CD8-positive, alpha-beta T cell (primary cell): ENCODE measurements at regions of chr17 and their contacts with region 1.

Region 1: DNA sequence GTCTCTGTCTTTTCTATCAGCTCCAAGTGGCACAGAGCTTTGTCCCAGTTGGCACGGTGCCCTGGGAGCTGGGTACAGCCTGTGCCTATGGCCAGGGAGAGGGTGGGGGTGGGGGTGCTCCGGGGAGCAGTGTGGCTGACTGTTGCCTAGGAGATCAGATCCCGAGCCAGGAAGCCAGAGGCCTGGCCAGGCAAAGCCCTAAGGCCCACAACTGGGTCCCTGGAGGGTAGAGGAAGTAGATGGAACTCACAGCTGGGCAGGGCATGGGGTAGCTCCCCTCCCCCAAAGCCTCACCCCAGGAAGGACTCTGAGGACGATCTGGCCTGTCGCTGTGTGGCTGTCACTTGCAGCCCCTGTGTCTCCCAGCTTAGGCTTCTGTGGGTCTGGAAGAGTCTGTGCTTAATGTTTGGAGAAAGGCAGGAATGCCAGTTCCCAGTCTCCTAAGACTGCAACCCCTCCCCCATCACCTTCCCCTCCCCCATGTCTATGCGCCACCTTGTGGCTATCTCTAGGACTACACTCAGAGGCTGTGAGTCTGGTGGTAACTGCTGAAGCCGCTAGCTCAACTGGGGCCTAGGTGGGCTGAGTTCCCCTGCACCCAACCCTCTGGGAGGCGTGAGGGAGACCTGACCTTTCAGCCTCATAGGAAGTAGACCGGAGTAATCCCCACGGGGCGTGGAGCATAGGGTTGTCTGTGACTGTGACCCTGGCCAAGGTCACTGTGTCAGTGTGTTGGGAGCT is 12.6 kb downstream of the THRA start:
- DNase-seq: peak; percentile 48 to 81 (median 70)
- ATAC-seq: peak; percentile 96
- H3K4me3 ChIP-seq: no peak overlapping the region
- H3K4me3 Mint-ChIP-seq: peak overlapping the region; percentile 45
- H3K27ac ChIP-seq: no peak overlapping the region
- H3K27ac Mint-ChIP-seq: peak overlapping the region; percentile 62
- H3K4me1 ChIP-seq: peaks cover 49% of the 10 kb centered on the region
- H3K4me1 Mint-ChIP-seq: peaks cover 53% of the 10 kb centered on the region
- H3K27me3 ChIP-seq: no peaks in the 10 kb centered on the region
- H3K27me3 Mint-ChIP-seq: no peaks in the 10 kb centered on the region
- CTCF ChIP-seq: peak; percentile 90

Region 2: DNA sequence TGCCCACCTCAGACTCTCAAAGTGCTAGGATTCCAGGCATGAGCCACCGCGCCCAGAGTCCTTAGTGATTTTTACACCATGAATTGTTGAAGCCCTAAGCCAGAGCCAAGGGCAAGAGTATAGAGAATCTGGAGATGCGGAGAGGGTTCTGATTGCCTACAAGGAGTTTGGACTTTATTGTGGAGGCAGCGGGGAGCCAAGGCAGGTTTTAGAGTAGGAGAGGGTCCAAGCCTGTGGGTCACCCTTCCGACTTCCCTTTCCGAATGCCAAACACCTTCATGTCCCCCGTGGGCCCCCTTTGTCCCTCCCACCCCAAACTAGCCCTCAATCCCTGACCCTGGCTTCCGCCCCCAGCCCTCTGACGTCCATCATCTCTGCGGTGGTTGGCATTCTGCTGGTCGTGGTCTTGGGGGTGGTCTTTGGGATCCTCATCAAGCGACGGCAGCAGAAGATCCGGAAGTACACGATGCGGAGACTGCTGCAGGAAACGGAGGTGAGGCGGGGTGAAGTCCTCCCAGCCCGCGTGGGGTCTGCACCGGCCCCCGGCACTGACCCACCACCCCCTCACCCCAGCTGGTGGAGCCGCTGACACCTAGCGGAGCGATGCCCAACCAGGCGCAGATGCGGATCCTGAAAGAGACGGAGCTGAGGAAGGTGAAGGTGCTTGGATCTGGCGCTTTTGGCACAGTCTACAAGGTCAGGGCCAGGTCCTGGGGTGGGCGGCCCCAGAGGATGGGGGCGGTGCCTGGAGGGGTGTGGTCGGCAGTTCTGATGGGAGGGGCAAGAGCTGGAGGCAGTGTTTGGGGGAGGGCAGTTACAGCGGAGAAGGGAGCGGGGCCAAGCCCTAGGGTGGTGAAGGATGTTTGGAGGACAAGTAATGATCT is 352.2 kb before region 1 on chr17:
- CTCF ChIA-PET with region 1: no interaction called
- POLR2A ChIA-PET with region 1: no interaction called
- intact Hi-C with region 1: no loop called
- DNase-seq: no peak
- ATAC-seq: no peak
- H3K4me3 ChIP-seq: no peak overlapping the region
- H3K4me3 Mint-ChIP-seq: no peak overlapping the region
- H3K27ac ChIP-seq: no peak overlapping the region
- H3K27ac Mint-ChIP-seq: no peak overlapping the region
- H3K4me1 ChIP-seq: no peaks in the 10 kb centered on the region
- H3K4me1 Mint-ChIP-seq: no peaks in the 10 kb centered on the region
- H3K27me3 ChIP-seq: no peaks in the 10 kb centered on the region
- H3K27me3 Mint-ChIP-seq: no peaks in the 10 kb centered on the region
- CTCF ChIP-seq: no peak

Region 3: GRCh38 chr17:40026816-40027613 is 48.4 kb before region 1 on chr17:
- CTCF ChIA-PET with region 1: interaction called, 36 read pairs
- POLR2A ChIA-PET with region 1: no interaction called
- intact Hi-C with region 1: no loop called
- DNase-seq: peak; percentile 45 to 87 (median 78)
- ATAC-seq: peak; percentile 88
- H3K4me3 ChIP-seq: no peak overlapping the region
- H3K4me3 Mint-ChIP-seq: no peak overlapping the region
- H3K27ac ChIP-seq: no peak overlapping the region
- H3K27ac Mint-ChIP-seq: no peak overlapping the region
- H3K4me1 ChIP-seq: peaks cover 21% of the 10 kb centered on the region
- H3K4me1 Mint-ChIP-seq: peaks cover 22% of the 10 kb centered on the region
- H3K27me3 ChIP-seq: no peaks in the 10 kb centered on the region
- H3K27me3 Mint-ChIP-seq: no peaks in the 10 kb centered on the region
- CTCF ChIP-seq: peak; percentile 79

Region 4: GRCh38 chr17:40062329-40063186 is 12.8 kb before region 1 on chr17 and contains the start of gene THRA:
- CTCF ChIA-PET with region 1: interaction called, 402 read pairs
- POLR2A ChIA-PET with region 1: interaction called, 22 read pairs
- intact Hi-C with region 1: loop called (anchors 1 kb)
- DNase-seq: peak; percentile 47 to 88 (median 71)
- ATAC-seq: peak; percentile 90
- H3K4me3 ChIP-seq: peak within 1 kb of the TSS; percentile 84 to 97
- H3K4me3 Mint-ChIP-seq: peak within 1 kb of the TSS; percentile 91
- H3K27ac ChIP-seq: peak within 1 kb of the TSS; percentile 49 to 64
- H3K27ac Mint-ChIP-seq: peak within 1 kb of the TSS; percentile 85
- H3K4me1 ChIP-seq: peaks cover 48% of the 10 kb centered on the region
- H3K4me1 Mint-ChIP-seq: peaks cover 45% of the 10 kb centered on the region
- H3K27me3 ChIP-seq: no peaks in the 10 kb centered on the region
- H3K27me3 Mint-ChIP-seq: no peaks in the 10 kb centered on the region
- CTCF ChIP-seq: no peak
- total RNA-seq, gene THRA: 34.6 to 35.7 TPM

Region 5: DNA sequence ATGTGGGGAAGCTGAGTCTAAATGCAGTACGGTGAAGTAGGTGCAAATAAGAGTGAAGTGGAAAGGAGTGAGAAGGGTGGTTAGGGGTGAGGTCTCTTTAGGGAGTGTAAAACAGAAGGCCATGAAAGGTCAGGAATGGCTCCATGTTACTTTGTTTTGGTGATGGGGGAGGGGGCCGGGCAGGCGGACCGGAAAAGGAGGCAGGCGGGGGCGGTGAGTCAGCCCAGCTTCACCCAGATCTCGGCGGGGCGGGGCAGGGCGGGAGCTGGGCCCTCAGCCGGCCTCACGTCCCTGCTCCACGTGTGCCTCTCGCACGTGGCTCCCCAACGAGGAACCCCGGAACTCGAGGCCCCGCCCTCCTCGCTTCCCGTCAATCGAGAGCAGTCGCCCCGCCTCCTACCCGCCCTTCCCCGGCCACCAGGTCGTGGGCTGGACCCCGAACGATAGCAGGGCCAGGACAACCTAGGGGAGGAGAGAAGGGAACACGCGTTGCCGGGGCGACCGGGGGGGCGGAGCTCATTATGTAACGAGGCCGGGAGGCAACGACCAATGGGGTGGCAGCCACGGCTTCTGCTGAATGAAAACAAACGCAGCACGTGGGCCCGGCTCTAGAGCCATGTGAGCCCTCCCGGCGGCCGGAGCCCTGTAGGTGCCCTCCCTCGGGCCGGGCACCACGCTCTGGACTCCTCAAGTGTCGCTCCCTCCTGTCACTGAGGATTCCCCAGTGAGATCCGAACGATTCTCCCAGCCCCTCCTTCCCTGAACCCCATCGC is 23.7 kb after region 1 on chr17:
- CTCF ChIA-PET with region 1: interaction called, 27 read pairs
- POLR2A ChIA-PET with region 1: interaction called, 20 read pairs
- intact Hi-C with region 1: loop called in 1 of 2 experiments (anchors 2 kb)
- DNase-seq: peak; percentile 97 to 100 (median 99)
- ATAC-seq: peak; percentile 64
- H3K4me3 ChIP-seq: peak overlapping the region; percentile 75 to 90
- H3K4me3 Mint-ChIP-seq: peak overlapping the region; percentile 94
- H3K27ac ChIP-seq: peak overlapping the region; percentile 79 to 98
- H3K27ac Mint-ChIP-seq: peak overlapping the region; percentile 95
- H3K4me1 ChIP-seq: peaks cover 80% of the 10 kb centered on the region
- H3K4me1 Mint-ChIP-seq: peaks cover 88% of the 10 kb centered on the region
- H3K27me3 ChIP-seq: no peaks in the 10 kb centered on the region
- H3K27me3 Mint-ChIP-seq: no peaks in the 10 kb centered on the region
- CTCF ChIP-seq: no peak

Region 6: DNA sequence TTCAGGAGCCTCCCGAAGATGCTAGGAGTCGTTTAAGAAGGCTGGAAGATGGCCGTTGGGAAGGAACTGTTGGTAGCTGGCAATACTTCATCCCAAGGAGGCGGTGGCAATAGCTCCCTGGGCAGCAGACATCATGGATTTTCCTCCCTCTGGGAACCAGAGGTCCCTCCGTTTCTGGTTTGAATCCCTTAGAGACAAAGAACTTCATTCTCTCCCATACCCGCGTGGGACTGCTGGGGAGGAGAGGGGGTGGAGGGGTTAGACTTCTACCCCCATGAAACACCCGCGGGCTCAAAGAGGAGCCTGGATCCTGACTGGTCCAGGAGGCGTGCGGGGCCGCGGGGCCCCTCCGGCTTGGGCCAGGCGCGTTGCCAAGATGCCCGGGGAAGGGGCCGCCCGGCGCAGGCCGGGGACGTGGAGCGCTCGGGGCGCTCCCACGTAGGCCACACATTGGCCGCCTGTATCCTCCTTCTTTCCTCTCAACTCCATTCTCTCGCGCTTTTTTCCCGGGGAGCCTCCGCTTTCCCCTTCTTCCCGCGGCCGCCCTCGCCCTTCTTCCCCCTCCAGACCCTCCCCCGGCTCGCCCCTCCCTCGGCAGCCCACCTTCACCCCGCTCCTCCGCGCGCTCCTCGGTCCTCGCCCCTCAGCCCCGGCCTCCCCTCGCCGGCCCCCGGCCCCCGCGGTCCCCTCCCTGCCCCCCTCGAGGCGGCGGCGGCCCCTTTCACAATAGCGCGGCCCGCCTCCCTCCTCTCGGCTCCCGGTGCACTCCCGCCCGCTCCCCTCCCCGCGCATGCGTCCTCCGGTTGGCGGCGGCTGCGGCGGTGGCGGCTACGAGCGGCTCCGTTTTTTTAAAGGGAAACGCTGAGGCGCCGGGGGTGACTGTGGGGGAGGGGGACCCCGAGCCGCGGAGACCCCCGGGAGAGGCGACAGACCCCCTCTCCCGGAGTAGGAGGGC is 46.1 kb after region 1 on chr17 and contains the start of gene MSL1:
- CTCF ChIA-PET with region 1: interaction called, 122 read pairs
- POLR2A ChIA-PET with region 1: interaction called, 7 read pairs
- intact Hi-C with region 1: no loop called
- DNase-seq: peak; percentile 69 to 92 (median 85)
- ATAC-seq: peak; percentile 65
- H3K4me3 ChIP-seq: peak within 1 kb of the TSS; percentile 75 to 93
- H3K4me3 Mint-ChIP-seq: peak within 1 kb of the TSS; percentile 81
- H3K27ac ChIP-seq: peak within 1 kb of the TSS; percentile 40 to 71
- H3K27ac Mint-ChIP-seq: peak within 1 kb of the TSS; percentile 83
- H3K4me1 ChIP-seq: peaks cover 14% of the 10 kb centered on the region
- H3K4me1 Mint-ChIP-seq: peaks cover 44% of the 10 kb centered on the region
- H3K27me3 ChIP-seq: no peaks in the 10 kb centered on the region
- H3K27me3 Mint-ChIP-seq: no peaks in the 10 kb centered on the region
- CTCF ChIP-seq: no peak
- total RNA-seq, gene MSL1: 43.8 to 46.6 TPM

Region 7: GRCh38 chr17:40542558-40543411 is 467.4 kb after region 1 on chr17:
- CTCF ChIA-PET with region 1: no interaction called
- POLR2A ChIA-PET with region 1: no interaction called
- intact Hi-C with region 1: no loop called
- DNase-seq: peak in 6 of 9 experiments; percentile 21 to 75 (median 58)
- ATAC-seq: peak; percentile 3
- H3K4me3 ChIP-seq: no peak overlapping the region
- H3K4me3 Mint-ChIP-seq: peak overlapping the region; percentile 72
- H3K27ac ChIP-seq: peak overlapping the region in 1 of 2 experiments; percentile 66
- H3K27ac Mint-ChIP-seq: peak overlapping the region; percentile 96
- H3K4me1 ChIP-seq: peaks cover 86% of the 10 kb centered on the region
- H3K4me1 Mint-ChIP-seq: peaks cover 88% of the 10 kb centered on the region
- H3K27me3 ChIP-seq: no peaks in the 10 kb centered on the region
- H3K27me3 Mint-ChIP-seq: no peaks in the 10 kb centered on the region
- CTCF ChIP-seq: no peak